Activated CD8-positive, alpha-beta T cell treated with anti-CD3 and anti-CD28 coated beads for 36 hours (primary cell): ENCODE measurements at regions of chr10 and their contacts with region 1.

Region 1: GRCh38 chr10:96374985-96375830 is 16.4 kb upstream of the OPALIN start:
- DNase-seq: peak; percentile 85
- ATAC-seq: peak; percentile 92
- H3K4me3 Mint-ChIP-seq: peak overlapping the region; percentile 78
- H3K27ac Mint-ChIP-seq: no peak overlapping the region
- H3K4me1 Mint-ChIP-seq: peaks cover 6% of the 10 kb centered on the region
- H3K27me3 Mint-ChIP-seq: peaks cover 7% of the 10 kb centered on the region
- CTCF ChIP-seq: peak; percentile 99

Region 2: GRCh38 chr10:96339957-96340904 is 35.0 kb before region 1 on chr10:
- CTCF ChIA-PET with region 1: interaction called, 11 read pairs
- POLR2A ChIA-PET with region 1: no interaction called
- intact Hi-C with region 1: no loop called
- DNase-seq: peak; percentile 81
- ATAC-seq: peak; percentile 88
- H3K4me3 Mint-ChIP-seq: no peak overlapping the region
- H3K27ac Mint-ChIP-seq: no peak overlapping the region
- H3K4me1 Mint-ChIP-seq: no peaks in the 10 kb centered on the region
- H3K27me3 Mint-ChIP-seq: no peaks in the 10 kb centered on the region
- CTCF ChIP-seq: peak; percentile 84

Region 3: GRCh38 chr10:96395931-96396877 is 21.0 kb after region 1 on chr10:
- CTCF ChIA-PET with region 1: interaction called, 33 read pairs
- POLR2A ChIA-PET with region 1: no interaction called
- intact Hi-C with region 1: no loop called
- DNase-seq: peak; percentile 79
- ATAC-seq: peak; percentile 94
- H3K4me3 Mint-ChIP-seq: no peak overlapping the region
- H3K27ac Mint-ChIP-seq: no peak overlapping the region
- H3K4me1 Mint-ChIP-seq: no peaks in the 10 kb centered on the region
- H3K27me3 Mint-ChIP-seq: peaks cover 16% of the 10 kb centered on the region
- CTCF ChIP-seq: peak; percentile 89

Region 4: DNA sequence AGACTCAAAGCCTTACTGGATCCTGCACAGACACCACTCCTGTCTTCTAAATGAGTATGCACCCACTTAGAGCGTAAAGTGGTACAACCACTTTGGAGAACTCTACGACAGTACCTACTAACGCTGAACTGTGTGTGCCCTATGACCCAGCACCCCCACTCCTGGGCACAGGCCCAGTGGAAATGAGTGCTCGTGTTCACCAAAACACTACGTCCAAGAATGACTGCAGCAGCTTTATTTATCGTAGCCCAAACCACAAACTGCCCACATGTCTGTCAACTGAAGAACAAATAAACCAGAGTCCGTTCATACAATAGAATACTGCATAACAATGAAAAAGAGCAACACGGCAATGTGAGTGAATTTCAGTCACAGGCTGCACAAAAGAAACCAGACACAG is 103.1 kb after region 1 on chr10:
- CTCF ChIA-PET with region 1: no interaction called
- POLR2A ChIA-PET with region 1: no interaction called
- intact Hi-C with region 1: no loop called
- DNase-seq: no peak
- ATAC-seq: no peak
- H3K4me3 Mint-ChIP-seq: no peak overlapping the region
- H3K27ac Mint-ChIP-seq: no peak overlapping the region
- H3K4me1 Mint-ChIP-seq: no peaks in the 10 kb centered on the region
- H3K27me3 Mint-ChIP-seq: peaks cover 19% of the 10 kb centered on the region
- CTCF ChIP-seq: no peak

Region 5: DNA sequence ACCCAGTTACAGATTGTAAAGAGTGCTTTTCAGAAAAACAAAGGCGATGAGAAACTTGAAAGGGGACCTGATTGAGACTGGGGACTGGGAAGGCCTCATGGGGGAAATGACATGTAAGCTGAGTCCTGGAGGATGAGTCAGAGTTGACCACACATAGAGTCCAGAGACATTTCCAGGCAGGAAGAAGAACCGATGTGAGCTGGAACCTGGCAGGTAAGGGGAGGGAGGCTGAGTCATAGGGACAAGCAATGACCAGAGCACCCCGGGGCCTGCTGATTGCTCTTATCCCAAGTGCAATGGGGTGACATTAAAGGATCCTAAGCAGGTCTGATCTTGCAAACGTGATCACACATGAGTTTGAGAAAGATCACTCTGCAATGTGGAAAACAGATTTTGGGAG is 126.8 kb after region 1 on chr10:
- CTCF ChIA-PET with region 1: interaction called, 10 read pairs
- POLR2A ChIA-PET with region 1: no interaction called
- intact Hi-C with region 1: no loop called
- DNase-seq: no peak
- ATAC-seq: no peak
- H3K4me3 Mint-ChIP-seq: no peak overlapping the region
- H3K27ac Mint-ChIP-seq: no peak overlapping the region
- H3K4me1 Mint-ChIP-seq: no peaks in the 10 kb centered on the region
- H3K27me3 Mint-ChIP-seq: no peaks in the 10 kb centered on the region
- CTCF ChIP-seq: no peak

Region 6: GRCh38 chr10:96996275-96996980 is 621.2 kb after region 1 on chr10:
- CTCF ChIA-PET with region 1: no interaction called
- POLR2A ChIA-PET with region 1: no interaction called
- intact Hi-C with region 1: no loop called
- DNase-seq: no peak
- ATAC-seq: no peak
- H3K4me3 Mint-ChIP-seq: no peak overlapping the region
- H3K27ac Mint-ChIP-seq: no peak overlapping the region
- H3K4me1 Mint-ChIP-seq: no peaks in the 10 kb centered on the region
- H3K27me3 Mint-ChIP-seq: no peaks in the 10 kb centered on the region
- CTCF ChIP-seq: no peak